ENCODE measurements at regions of chr12 and their contacts with region 1.

Region 1: DNA sequence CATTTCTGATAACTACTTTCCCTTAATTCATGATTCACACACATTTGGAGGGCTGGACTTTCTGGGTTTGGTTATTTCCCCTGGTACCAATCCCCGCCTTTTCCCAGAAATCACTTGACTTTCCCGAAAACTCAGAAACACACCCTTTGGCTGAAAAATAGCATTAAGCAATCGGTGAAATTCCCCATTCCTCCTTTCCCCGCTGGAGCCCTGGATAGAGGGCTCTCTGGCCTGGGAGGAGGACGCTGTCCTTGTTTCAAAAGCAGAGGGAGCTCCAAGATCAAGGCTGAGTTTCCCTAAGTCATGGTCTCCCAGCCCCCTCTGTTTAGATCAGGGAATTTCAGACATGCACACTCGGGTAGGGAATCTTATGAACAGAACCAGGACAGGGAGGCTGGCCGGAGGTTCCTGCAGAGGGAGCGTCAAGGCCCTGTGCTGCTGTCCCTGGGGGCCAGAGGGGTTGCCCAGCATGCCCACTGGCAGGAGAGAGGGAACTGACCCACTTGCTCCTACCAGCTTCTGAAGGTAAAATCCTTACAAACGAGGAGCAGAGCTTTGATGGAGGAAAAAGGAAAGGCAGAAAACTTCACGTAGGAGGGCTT is at the start of gene C1S:
- DNase-seq: peak; percentile 60 to 80
- ATAC-seq: peak; percentile 96 to 98 (median 97)
- H3K4me3 ChIP-seq: peak within 1 kb of the TSS in 9 of 10 donors; percentile 23 to 51 (median 41)
- H3K27ac ChIP-seq: peak within 1 kb of the TSS in 9 of 10 donors; percentile 25 to 90 (median 68)
- H3K4me1 ChIP-seq: peaks cover 0 to 44% (median 10%) of the 10 kb centered on the region in 9 donors
- H3K27me3 ChIP-seq: no peaks in the 10 kb centered on the region
- CTCF ChIP-seq: peak; percentile 55 to 88 (median 77)
- total RNA-seq, gene C1S: 25.1 to 151 (median 51.6) TPM

Region 2: DNA sequence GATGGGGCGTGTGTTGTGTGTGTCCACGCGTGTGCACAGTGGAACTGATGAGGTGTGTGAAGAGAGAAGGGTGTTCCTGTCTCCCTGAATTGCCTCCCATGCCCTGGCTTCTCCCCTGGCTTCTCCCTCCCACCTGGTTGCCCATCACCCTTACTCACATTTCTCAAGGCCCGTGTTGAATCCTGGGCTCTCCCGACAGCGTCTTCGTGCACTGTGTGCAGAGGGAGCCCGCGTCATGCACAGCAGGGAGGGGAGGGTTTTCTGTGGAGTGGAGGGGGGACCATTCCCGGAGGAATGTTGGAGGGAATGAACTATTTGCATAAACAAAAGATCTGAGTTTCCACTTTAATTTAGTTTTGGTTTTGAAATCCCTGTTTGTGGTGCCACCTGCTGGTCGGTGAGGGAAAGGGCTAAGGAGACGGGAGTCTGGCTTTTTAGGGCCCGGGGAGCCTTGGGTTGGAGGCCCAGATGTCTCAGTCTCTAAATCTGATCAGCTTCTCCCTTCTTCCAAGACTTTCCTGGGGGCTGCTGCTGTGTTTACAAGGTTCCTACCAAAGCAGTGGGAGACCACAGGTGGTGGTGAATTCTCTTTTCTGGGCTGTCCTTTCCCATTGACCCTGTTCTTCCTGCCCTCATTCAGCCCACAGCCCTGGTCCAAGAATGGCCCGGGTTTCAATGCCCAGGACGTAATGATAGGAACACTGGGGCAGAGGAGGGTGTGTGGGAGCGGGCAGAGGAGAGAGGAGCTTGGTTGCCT is 32.0 kb after region 1 on chr12 and contains the start of gene C1R:
- intact Hi-C with region 1: loop called in 9 of 10 experiments (anchors 1 to 5 kb)
- DNase-seq: peak; percentile 66 to 77
- ATAC-seq: peak; percentile 74 to 88 (median 84)
- H3K4me3 ChIP-seq: peak within 1 kb of the TSS; percentile 9 to 67 (median 58)
- H3K27ac ChIP-seq: peak within 1 kb of the TSS; percentile 46 to 84 (median 79)
- H3K4me1 ChIP-seq: peaks cover 0 to 26% (median 16%) of the 10 kb centered on the region in 9 donors
- H3K27me3 ChIP-seq: no peaks in the 10 kb centered on the region
- CTCF ChIP-seq: peak; percentile 83 to 94 (median 91)
- total RNA-seq, gene C1R: 19.9 to 238 (median 59.0) TPM

Region 3: GRCh38 chr12:7099290-7099996 is 39.0 kb after region 1 on chr12:
- intact Hi-C with region 1: loop called in 3 of 10 experiments (anchors 1 to 10 kb)
- DNase-seq: no peak
- ATAC-seq: no peak
- H3K4me3 ChIP-seq: no peak overlapping the region
- H3K27ac ChIP-seq: no peak overlapping the region
- H3K4me1 ChIP-seq: peaks cover 0 to 24% (median 0%) of the 10 kb centered on the region in 9 donors
- H3K27me3 ChIP-seq: no peaks in the 10 kb centered on the region
- CTCF ChIP-seq: no peak

Region 4: GRCh38 chr12:7108796-7109571 is 48.5 kb after region 1 on chr12 and contains the start of gene C1RL:
- intact Hi-C with region 1: loop called in 7 of 10 experiments (anchors 1 to 10 kb)
- DNase-seq: peak; percentile 90
- ATAC-seq: peak; percentile 75 to 91 (median 88)
- H3K4me3 ChIP-seq: peak within 1 kb of the TSS in 9 of 10 donors; percentile 41 to 70 (median 63)
- H3K27ac ChIP-seq: peak within 1 kb of the TSS; percentile 70 to 98 (median 89)
- H3K4me1 ChIP-seq: peaks cover 0 to 44% (median 14%) of the 10 kb centered on the region in 9 donors
- H3K27me3 ChIP-seq: no peaks in the 10 kb centered on the region
- CTCF ChIP-seq: peak; percentile 94 to 99 (median 97)
- total RNA-seq, gene C1RL: 4.5 to 24.9 (median 7.5) TPM

Region 5: GRCh38 chr12:7121324-7121723 is 60.9 kb after region 1 on chr12:
- intact Hi-C with region 1: no loop called
- DNase-seq: no peak
- ATAC-seq: no peak
- H3K4me3 ChIP-seq: no peak overlapping the region
- H3K27ac ChIP-seq: peak overlapping the region in 1 of 10 donors; percentile 38
- H3K4me1 ChIP-seq: peaks cover 0 to 19% (median 15%) of the 10 kb centered on the region in 9 donors
- H3K27me3 ChIP-seq: no peaks in the 10 kb centered on the region
- CTCF ChIP-seq: no peak